ENCODE measurements at regions of chr17 and their contacts with region 1.

Region 1: DNA sequence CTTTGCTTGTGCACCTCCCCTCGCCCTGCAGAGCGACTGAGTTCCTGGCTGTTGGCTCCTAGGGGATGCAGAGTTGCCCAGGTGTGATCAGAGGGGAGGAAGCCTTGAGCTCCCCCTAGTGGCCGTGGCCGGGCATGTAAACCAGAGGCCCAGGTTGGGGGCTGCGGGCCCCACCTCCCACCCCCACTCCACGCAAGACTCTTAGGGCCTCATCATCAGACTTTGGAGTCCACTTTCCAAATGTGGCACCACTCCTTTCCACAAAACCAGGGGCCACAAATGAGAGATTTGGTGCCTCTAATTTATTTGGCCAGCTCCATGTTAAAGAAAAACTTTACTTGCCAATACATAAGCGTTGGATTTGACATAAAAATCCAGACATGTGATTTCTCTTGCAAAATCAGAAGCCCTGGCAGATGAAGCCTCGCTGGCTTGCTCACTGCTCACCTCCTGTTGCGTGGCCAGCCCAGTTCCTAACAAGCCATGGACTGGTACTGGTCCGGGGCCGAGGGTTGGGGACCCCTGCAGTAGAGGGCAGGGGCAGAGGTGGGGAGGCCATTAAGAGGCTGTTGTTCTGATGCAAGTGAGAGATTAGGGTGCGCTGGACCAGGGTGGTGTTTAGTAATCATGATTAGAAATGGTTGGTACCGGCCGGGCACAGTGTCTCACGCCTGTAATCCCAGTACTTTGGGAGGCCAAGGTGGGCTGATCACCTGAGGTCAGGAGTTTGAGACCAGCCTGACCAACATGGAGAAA is 28.7 kb upstream of the GAS7 start:
- DNase-seq: peak; percentile 89
- ATAC-seq: peak; percentile 99
- H3K4me3 Mint-ChIP-seq: no peak overlapping the region
- H3K27ac Mint-ChIP-seq: no peak overlapping the region
- H3K4me1 Mint-ChIP-seq: no peaks in the 10 kb centered on the region
- H3K27me3 Mint-ChIP-seq: no peaks in the 10 kb centered on the region
- CTCF ChIP-seq: peak; percentile 97

Region 2: GRCh38 chr17:9982159-9982558 is 244.9 kb before region 1 on chr17:
- CTCF ChIA-PET with region 1: interaction called, 19 read pairs
- POLR2A ChIA-PET with region 1: no interaction called
- DNase-seq: peak; percentile 63
- ATAC-seq: peak; percentile 84
- H3K4me3 Mint-ChIP-seq: no peak overlapping the region
- H3K27ac Mint-ChIP-seq: no peak overlapping the region
- H3K4me1 Mint-ChIP-seq: peaks cover 3% of the 10 kb centered on the region
- H3K27me3 Mint-ChIP-seq: no peaks in the 10 kb centered on the region
- CTCF ChIP-seq: 0 out of 2 replicates have a peak, but pooled peaks have one; percentile 44

Region 3: DNA sequence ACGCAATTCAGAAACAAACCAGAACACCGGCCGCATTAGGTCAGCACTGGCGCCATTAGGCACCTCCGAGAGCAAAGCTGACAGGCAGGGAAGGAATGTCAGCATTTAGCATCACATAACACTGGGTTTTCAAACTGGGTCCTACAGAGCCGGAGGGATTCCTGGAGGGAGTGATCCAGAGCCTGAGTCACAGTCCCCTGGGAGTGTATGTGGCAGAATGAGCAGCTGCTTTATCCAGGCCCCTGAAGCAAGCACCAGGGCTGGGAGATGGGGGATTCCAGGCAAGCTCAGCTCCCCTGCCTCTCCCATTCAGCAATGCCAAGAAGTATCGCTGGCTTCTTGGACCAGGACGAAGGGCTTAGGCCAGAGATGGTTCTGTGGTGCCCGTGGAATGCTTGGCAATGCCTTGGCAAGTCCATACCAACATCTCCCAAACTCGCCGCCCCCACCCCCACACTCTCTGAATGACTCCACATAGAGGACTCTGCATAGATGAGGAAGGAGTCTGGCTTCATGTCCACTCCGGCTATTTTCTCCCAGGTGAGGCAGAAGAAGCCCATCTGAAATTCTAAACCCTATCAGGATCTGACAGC is 49.1 kb before region 1 on chr17:
- CTCF ChIA-PET with region 1: interaction called, 12 read pairs
- POLR2A ChIA-PET with region 1: no interaction called
- DNase-seq: peak; percentile 52
- ATAC-seq: peak; percentile 92
- H3K4me3 Mint-ChIP-seq: no peak overlapping the region
- H3K27ac Mint-ChIP-seq: no peak overlapping the region
- H3K4me1 Mint-ChIP-seq: peaks cover 47% of the 10 kb centered on the region
- H3K27me3 Mint-ChIP-seq: no peaks in the 10 kb centered on the region
- CTCF ChIP-seq: no peak

Region 4: GRCh38 chr17:10238661-10239060 is 11.6 kb after region 1 on chr17:
- CTCF ChIA-PET with region 1: interaction called, 23 read pairs
- POLR2A ChIA-PET with region 1: no interaction called
- DNase-seq: no peak
- ATAC-seq: no peak
- H3K4me3 Mint-ChIP-seq: no peak overlapping the region
- H3K27ac Mint-ChIP-seq: no peak overlapping the region
- H3K4me1 Mint-ChIP-seq: no peaks in the 10 kb centered on the region
- H3K27me3 Mint-ChIP-seq: peaks cover 4% of the 10 kb centered on the region; the same call in 1 of the 2 replicates
- CTCF ChIP-seq: no peak

Region 5: DNA sequence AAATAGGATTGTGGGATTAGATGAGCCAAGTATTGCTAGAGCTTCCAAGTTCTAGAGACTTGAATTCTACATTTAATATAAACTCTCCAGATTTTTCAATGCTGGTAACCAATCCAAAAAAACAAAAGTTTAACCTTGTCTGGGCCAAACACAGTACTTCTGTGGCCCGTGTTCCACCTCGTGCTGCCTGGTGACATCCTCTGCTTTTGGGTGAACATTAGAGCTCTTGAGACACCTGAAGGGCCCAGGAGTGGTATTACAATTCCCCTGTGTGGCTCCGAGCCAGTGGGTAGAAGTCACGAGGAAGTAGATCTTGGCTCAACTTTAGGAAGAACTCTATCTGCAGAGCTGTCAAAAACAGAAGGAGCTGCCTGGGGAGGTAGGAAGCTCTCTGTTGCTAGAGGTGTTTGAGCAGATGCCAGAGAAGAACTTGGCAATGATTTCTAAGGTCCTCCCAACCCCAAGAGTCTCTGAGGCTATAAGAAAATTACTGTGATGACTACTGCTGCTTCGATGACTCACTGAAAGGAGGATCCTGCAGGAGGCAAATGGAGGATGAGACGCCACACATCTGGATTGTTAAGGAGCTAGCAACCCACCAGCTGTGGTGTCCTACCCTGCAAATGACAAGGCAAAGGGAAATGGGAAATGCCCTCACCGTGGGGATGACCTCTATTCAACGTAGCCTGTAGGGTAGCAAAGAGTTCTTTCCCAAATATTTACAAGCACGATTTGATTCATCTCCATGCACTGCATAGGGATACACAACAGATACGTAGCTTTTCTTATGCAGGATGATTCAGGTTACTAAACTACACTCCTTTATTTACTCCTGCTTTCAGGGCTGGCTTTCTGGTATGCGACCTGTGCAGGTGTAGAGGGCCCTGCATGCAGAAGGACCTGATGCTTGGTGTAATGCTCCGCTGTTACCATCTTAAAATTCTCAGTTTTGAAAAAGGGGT is 17.1 kb after region 1 on chr17:
- CTCF ChIA-PET with region 1: interaction called, 23 read pairs
- POLR2A ChIA-PET with region 1: no interaction called
- DNase-seq: no peak
- ATAC-seq: no peak
- H3K4me3 Mint-ChIP-seq: no peak overlapping the region
- H3K27ac Mint-ChIP-seq: no peak overlapping the region
- H3K4me1 Mint-ChIP-seq: no peaks in the 10 kb centered on the region
- H3K27me3 Mint-ChIP-seq: no peaks in the 10 kb centered on the region
- CTCF ChIP-seq: no peak

Measured in WTC11 (cell line).